ENCODE measurements at regions of chr16 and their contacts with region 1.

Region 1: DNA sequence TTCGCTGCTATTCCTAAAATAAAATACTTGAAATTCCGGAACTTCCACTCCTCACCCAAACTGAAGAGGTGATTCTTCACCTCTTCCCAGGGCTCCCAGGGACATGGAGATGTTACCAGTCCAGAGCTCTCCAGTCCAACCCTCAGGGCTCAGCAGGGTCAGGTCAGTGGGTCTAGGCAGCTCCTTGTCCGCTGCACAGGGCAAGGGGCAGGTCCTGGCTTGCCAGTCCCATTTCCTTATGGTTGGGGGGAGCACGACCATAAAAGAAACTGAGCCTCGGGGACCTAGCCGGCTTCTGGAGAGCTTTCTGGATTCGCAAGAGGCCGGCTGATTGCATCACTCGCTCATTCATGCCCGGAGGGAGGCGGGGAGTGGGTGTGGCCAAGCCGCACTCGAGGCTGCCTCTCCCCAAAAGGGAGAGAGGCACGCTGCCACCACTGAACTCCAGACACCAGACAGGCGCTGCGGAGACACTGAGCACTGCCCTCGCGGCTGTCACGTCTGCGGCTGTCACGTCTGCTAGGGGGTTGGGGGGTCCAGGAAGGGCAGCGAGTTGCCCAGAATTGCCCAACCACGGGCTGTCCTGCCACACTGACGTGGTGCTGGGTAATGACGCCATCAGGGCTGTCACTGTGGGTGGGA is 15.8 kb downstream of the SLC7A5 start:
- DNase-seq: peak; percentile 95
- H3K4me3 Mint-ChIP-seq: peak overlapping the region; percentile 66
- H3K27ac Mint-ChIP-seq: peak overlapping the region; percentile 90
- H3K4me1 Mint-ChIP-seq: peaks cover 67% of the 10 kb centered on the region
- H3K27me3 Mint-ChIP-seq: no peaks in the 10 kb centered on the region

Region 2: DNA sequence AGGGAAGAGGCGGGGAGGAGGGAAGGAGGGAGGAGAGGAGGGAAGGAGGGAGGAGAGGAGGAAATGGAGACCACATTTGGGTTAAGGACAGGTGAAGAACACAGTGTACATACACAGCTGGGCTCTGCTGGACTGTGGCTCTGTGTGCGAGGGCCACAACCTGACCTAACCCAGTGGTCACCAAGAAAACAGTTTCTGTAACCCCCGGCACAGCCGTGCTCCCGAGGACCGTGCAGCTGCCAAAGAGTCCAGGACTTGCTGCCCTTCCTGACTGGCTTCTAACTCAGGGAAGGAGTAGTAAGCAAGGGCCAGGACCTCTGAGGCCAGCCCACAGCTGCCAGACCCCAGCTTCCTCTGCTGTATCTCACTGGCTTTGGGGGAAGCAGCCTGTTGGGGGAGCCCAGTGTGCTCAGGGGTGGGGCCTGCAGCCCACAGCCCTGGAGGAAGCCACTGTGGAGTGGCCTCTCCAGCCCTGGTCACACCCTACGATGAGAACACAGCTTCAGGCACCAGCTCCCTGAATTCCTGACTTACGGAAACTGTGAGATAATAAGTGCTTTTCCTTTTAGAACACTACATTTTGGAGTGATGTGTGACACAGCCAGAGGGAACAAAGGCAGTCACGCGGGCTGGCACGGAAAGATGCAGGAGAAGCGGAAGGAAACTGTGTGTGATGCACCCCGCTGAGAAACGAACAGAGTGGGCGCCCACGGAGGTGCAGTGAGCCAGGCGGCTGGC is 16.5 kb before region 1 on chr16:
- CTCF ChIA-PET with region 1: interaction called, 17 read pairs
- POLR2A ChIA-PET with region 1: no interaction called
- DNase-seq: no peak
- H3K4me3 Mint-ChIP-seq: no peak overlapping the region
- H3K27ac Mint-ChIP-seq: peak overlapping the region; percentile 35
- H3K4me1 Mint-ChIP-seq: peaks cover 2% of the 10 kb centered on the region
- H3K27me3 Mint-ChIP-seq: no peaks in the 10 kb centered on the region

Region 3: GRCh38 chr16:87877938-87878507 is 24.5 kb after region 1 on chr16:
- CTCF ChIA-PET with region 1: interaction called, 286 read pairs
- POLR2A ChIA-PET with region 1: interaction called, 8 read pairs
- DNase-seq: peak; percentile 57
- H3K4me3 Mint-ChIP-seq: no peak overlapping the region
- H3K27ac Mint-ChIP-seq: no peak overlapping the region
- H3K4me1 Mint-ChIP-seq: peaks cover 30% of the 10 kb centered on the region
- H3K27me3 Mint-ChIP-seq: peaks cover 22% of the 10 kb centered on the region

Region 4: DNA sequence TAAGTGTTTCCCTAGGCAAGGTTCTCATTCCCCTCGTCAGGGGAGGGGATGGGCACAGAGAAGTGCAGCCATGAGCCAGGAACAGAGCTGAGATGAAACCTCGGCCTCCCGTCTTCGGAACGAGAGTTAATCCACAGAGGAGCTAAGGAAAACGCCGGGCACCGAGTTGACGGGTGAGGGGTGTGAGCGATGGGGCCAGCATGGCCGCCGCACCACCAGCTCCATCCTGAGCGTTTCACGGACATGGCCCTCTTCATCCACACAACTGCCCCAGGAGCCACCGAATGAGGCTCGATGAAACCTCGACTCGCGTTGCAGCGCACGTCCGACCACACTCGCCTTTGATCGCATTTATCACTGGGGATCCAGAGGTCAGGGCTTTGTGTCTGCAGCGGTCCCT is 61.3 kb after region 1 on chr16:
- CTCF ChIA-PET with region 1: interaction called, 13 read pairs
- POLR2A ChIA-PET with region 1: no interaction called
- DNase-seq: no peak
- H3K4me3 Mint-ChIP-seq: no peak overlapping the region
- H3K27ac Mint-ChIP-seq: no peak overlapping the region
- H3K4me1 Mint-ChIP-seq: peaks cover 4% of the 10 kb centered on the region
- H3K27me3 Mint-ChIP-seq: peaks cover 10% of the 10 kb centered on the region